ENCODE measurements at regions of chr17 and their contacts with region 1.

Region 1: DNA sequence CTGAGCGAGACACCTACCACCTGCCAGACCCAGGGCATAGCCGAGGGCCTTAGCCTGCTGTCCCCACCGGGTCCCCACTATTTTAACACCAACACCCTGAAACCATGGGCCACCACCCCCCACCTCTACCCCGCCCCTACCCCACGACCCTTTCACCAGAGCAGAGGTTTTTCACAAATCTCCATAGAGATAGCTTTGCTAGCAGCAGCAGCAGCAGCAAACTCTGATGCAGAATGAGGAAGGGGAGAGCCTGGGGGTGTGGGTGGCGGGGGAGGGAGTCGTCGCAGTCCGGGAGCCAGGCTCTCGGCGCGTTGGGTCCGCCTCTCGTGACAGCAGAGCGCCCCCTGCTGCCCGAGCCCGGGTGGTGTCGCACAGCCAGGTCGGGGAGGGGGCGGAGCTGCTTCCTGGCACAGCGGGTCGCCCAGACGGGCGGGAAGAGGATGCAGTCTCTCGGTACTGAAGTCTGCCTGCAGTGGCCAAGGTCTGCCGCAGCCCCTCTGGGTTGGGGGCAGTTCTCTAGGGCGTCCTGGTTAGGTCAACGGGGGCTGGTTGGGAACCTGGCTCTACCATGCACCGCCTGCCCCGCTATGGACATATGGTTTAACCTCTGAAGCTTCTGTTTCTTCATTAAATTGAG is 38.1 kb upstream of the CCDC182 start:
- DNase-seq: peak; percentile 86
- ATAC-seq: peak; percentile 97
- H3K4me3 Mint-ChIP-seq: no peak overlapping the region
- H3K27ac Mint-ChIP-seq: no peak overlapping the region
- H3K4me1 Mint-ChIP-seq: no peaks in the 10 kb centered on the region
- H3K27me3 Mint-ChIP-seq: peaks cover 22% of the 10 kb centered on the region

Region 2: GRCh38 chr17:57130761-57131461 is 652.3 kb before region 1 on chr17:
- CTCF ChIA-PET with region 1: interaction called, 12 read pairs
- POLR2A ChIA-PET with region 1: no interaction called
- DNase-seq: peak; percentile 89
- ATAC-seq: peak; percentile 91
- H3K4me3 Mint-ChIP-seq: peak overlapping the region; percentile 7
- H3K27ac Mint-ChIP-seq: no peak overlapping the region
- H3K4me1 Mint-ChIP-seq: peaks cover 7% of the 10 kb centered on the region
- H3K27me3 Mint-ChIP-seq: no peaks in the 10 kb centered on the region

Region 3: DNA sequence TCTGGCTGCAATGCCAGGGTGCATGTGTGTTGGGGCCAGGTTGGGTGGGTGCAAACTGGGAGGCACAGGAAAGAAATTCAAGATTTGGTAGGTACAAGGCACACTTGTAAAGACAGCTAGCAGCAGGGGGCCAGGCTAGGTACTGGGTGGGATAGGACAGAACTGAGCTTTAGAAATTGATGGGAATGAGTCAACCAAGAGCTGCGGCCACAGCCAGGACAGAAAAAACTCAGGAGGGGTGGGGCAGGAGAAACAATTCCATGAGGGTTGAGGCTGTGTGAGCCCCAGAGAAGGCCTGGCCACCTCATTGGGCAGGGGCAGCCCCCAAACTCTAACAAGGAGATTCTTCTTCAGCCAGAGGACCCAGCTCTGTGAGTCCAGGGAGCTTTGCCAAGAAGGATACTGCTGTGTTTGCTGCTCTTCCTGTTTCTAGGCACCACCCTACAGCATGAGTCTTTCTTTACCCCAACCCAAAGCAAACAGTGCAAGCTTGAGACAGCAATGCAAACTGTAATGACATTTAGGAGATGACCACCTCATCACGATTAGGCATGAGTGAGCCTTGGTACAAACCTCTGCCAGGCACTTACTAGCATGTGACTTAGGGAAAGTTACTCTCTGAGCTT is 16.8 kb before region 1 on chr17:
- CTCF ChIA-PET with region 1: interaction called, 20 read pairs
- POLR2A ChIA-PET with region 1: interaction called, 3 read pairs
- DNase-seq: no peak
- ATAC-seq: no peak
- H3K4me3 Mint-ChIP-seq: no peak overlapping the region
- H3K27ac Mint-ChIP-seq: no peak overlapping the region
- H3K4me1 Mint-ChIP-seq: peaks cover 4% of the 10 kb centered on the region
- H3K27me3 Mint-ChIP-seq: peaks cover 30% of the 10 kb centered on the region

Region 4: GRCh38 chr17:57794841-57795240 is 11.6 kb after region 1 on chr17:
- CTCF ChIA-PET with region 1: interaction called, 29 read pairs
- POLR2A ChIA-PET with region 1: no interaction called
- DNase-seq: no peak
- ATAC-seq: no peak
- H3K4me3 Mint-ChIP-seq: no peak overlapping the region
- H3K27ac Mint-ChIP-seq: no peak overlapping the region
- H3K4me1 Mint-ChIP-seq: peaks cover 1% of the 10 kb centered on the region
- H3K27me3 Mint-ChIP-seq: peaks cover 11% of the 10 kb centered on the region

Region 5: DNA sequence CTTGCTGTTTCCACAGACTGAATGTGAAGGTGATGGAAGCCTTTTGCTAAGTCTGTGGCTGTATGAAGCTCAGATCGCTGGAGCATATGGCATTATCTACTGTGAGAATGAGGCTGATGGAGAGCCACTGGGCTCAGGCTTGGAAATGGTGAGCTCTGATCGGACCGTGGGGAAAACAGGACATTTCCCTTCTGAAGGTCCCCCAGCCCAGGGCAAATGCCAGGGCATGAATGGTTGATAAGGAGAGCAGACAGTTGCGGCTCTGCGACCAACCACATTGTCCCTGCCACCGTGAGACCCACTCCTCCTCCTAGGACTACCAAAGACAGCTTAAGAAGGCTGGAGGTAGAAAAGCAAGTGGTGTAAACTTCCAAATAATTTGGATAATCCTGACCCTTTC is 176.7 kb after region 1 on chr17:
- CTCF ChIA-PET with region 1: no interaction called
- POLR2A ChIA-PET with region 1: no interaction called
- DNase-seq: no peak
- ATAC-seq: no peak
- H3K4me3 Mint-ChIP-seq: no peak overlapping the region
- H3K27ac Mint-ChIP-seq: no peak overlapping the region
- H3K4me1 Mint-ChIP-seq: peaks cover 21% of the 10 kb centered on the region
- H3K27me3 Mint-ChIP-seq: peaks cover 52% of the 10 kb centered on the region

Measured in activated CD8-positive, alpha-beta T cell treated with anti-CD3 and anti-CD28 coated beads, Interleukin-2, amount 10 ng/mL, durations not matched to agents 7 days and 5 days (primary cell).